Breast epithelium (tissue), 4 donors: ENCODE measurements at regions of chr15 and their contacts with region 1.

Region 1: GRCh38 chr15:83837945-83838571 is 184.1 kb downstream of the ADAMTSL3 start:
- DNase-seq: no peak
- H3K4me3 ChIP-seq: no peak overlapping the region
- H3K27ac ChIP-seq: no peak overlapping the region
- H3K4me1 ChIP-seq: no peaks in the 10 kb centered on the region
- H3K27me3 ChIP-seq: no peaks in the 10 kb centered on the region
- CTCF ChIP-seq: peak in 2 of 3 donors; percentile 22 to 32
- POLR2A ChIP-seq: no peak

Region 2: DNA sequence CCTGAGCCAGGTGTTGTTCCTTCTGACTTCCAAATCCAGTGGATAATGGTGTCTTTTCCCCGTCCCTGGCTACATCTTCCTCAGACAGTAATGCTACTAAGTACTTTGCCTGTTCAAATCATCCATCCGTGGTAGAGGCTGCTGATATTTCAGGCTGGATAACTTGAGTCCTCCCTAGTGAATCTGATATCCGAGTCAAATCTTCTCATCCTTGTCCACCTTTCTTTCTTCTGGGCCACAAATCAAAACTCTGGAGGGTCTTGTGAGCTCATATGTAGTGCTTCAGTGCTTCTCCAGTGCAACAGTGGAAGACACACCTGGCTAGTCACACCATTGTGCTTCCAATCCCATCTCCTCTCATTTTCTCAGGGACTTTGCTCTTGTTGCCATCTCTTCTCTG is 379.7 kb before region 1 on chr15:
- intact Hi-C with region 1: loop called (anchors 5 kb)
- DNase-seq: no peak
- H3K4me3 ChIP-seq: no peak overlapping the region
- H3K27ac ChIP-seq: no peak overlapping the region
- H3K4me1 ChIP-seq: no peaks in the 10 kb centered on the region
- H3K27me3 ChIP-seq: no peaks in the 10 kb centered on the region
- CTCF ChIP-seq: no peak
- POLR2A ChIP-seq: no peak